ENCODE measurements at regions of chr1 and their contacts with region 1.

Region 1: GRCh38 chr1:114558544-114558943 is 22.9 kb downstream of the BCAS2 start:
- DNase-seq: no peak
- H3K4me3 ChIP-seq: no peak overlapping the region
- H3K4me3 Mint-ChIP-seq: no peak overlapping the region
- H3K27ac Mint-ChIP-seq: no peak overlapping the region
- H3K4me1 ChIP-seq: no peaks in the 10 kb centered on the region
- H3K4me1 Mint-ChIP-seq: peaks cover 6% of the 10 kb centered on the region
- H3K27me3 ChIP-seq: no peaks in the 10 kb centered on the region
- H3K27me3 Mint-ChIP-seq: no peaks in the 10 kb centered on the region
- CTCF ChIP-seq: peak in 1 of 2 experiments; percentile 21

Region 2: GRCh38 chr1:114472408-114472807 is 86.1 kb before region 1 on chr1:
- CTCF ChIA-PET with region 1: no interaction called
- POLR2A ChIA-PET with region 1: no interaction called
- intact Hi-C with region 1: no loop called
- DNase-seq: no peak
- H3K4me3 ChIP-seq: no peak overlapping the region
- H3K4me3 Mint-ChIP-seq: no peak overlapping the region
- H3K27ac Mint-ChIP-seq: no peak overlapping the region
- H3K4me1 ChIP-seq: peaks cover 4% of the 10 kb centered on the region
- H3K4me1 Mint-ChIP-seq: peaks cover 25% of the 10 kb centered on the region
- H3K27me3 ChIP-seq: no peaks in the 10 kb centered on the region
- H3K27me3 Mint-ChIP-seq: no peaks in the 10 kb centered on the region
- CTCF ChIP-seq: no peak

Region 3: GRCh38 chr1:114511032-114511785 is 47.3 kb before region 1 on chr1 and contains the start of gene TRIM33:
- CTCF ChIA-PET with region 1: no interaction called
- POLR2A ChIA-PET with region 1: no interaction called
- intact Hi-C with region 1: loop called (anchors 2 kb)
- DNase-seq: peak; percentile 86 to 89
- H3K4me3 ChIP-seq: peak within 1 kb of the TSS; percentile 51
- H3K4me3 Mint-ChIP-seq: peak within 1 kb of the TSS; percentile 81
- H3K27ac Mint-ChIP-seq: peak within 1 kb of the TSS; percentile 95
- H3K4me1 ChIP-seq: peaks cover 11% of the 10 kb centered on the region; the same call in 1 of the 2 replicates
- H3K4me1 Mint-ChIP-seq: peaks cover 28% of the 10 kb centered on the region
- H3K27me3 ChIP-seq: no peaks in the 10 kb centered on the region
- H3K27me3 Mint-ChIP-seq: no peaks in the 10 kb centered on the region
- CTCF ChIP-seq: no peak
- total RNA-seq, gene TRIM33: 28.7 and 30.4 TPM in 2 replicates

Region 4: GRCh38 chr1:114729782-114730181 is 171.2 kb after region 1 on chr1:
- CTCF ChIA-PET with region 1: no interaction called
- POLR2A ChIA-PET with region 1: no interaction called
- intact Hi-C with region 1: no loop called
- DNase-seq: no peak
- H3K4me3 ChIP-seq: no peak overlapping the region
- H3K4me3 Mint-ChIP-seq: no peak overlapping the region
- H3K27ac Mint-ChIP-seq: no peak overlapping the region
- H3K4me1 ChIP-seq: no peaks in the 10 kb centered on the region
- H3K4me1 Mint-ChIP-seq: no peaks in the 10 kb centered on the region
- H3K27me3 ChIP-seq: no peaks in the 10 kb centered on the region
- H3K27me3 Mint-ChIP-seq: no peaks in the 10 kb centered on the region
- CTCF ChIP-seq: no peak

Measured in Caco-2 (cell line).